MCF 10A (cell line): ENCODE measurements at regions of chr3 and their contacts with region 1.

Region 1: GRCh38 chr3:197711973-197712707 is 24.6 kb downstream of the RUBCN start:
- DNase-seq: peak; percentile 97
- H3K4me3 Mint-ChIP-seq: peak overlapping the region; percentile 82
- H3K27ac Mint-ChIP-seq: peak overlapping the region; percentile 98
- H3K4me1 Mint-ChIP-seq: peaks cover 14% of the 10 kb centered on the region
- H3K27me3 Mint-ChIP-seq: no peaks in the 10 kb centered on the region
- CTCF ChIP-seq: no peak

Region 2: GRCh38 chr3:197730200-197730599 is 18.1 kb after region 1 on chr3:
- CTCF ChIA-PET with region 1: interaction called, 3 read pairs
- POLR2A ChIA-PET with region 1: interaction called, 105 read pairs
- intact Hi-C with region 1: no loop called
- DNase-seq: peak; percentile 60
- H3K4me3 Mint-ChIP-seq: no peak overlapping the region
- H3K27ac Mint-ChIP-seq: peak overlapping the region; percentile 91
- H3K4me1 Mint-ChIP-seq: peaks cover 25% of the 10 kb centered on the region
- H3K27me3 Mint-ChIP-seq: no peaks in the 10 kb centered on the region
- CTCF ChIP-seq: no peak

Region 3: GRCh38 chr3:197736491-197737318 is 24.6 kb after region 1 on chr3 and contains the start of gene RUBCN:
- CTCF ChIA-PET with region 1: no interaction called
- POLR2A ChIA-PET with region 1: interaction called, 105 read pairs
- intact Hi-C with region 1: loop called (anchors 1 kb)
- DNase-seq: peak; percentile 92
- H3K4me3 Mint-ChIP-seq: peak within 1 kb of the TSS; percentile 82
- H3K27ac Mint-ChIP-seq: peak within 1 kb of the TSS; percentile 82
- H3K4me1 Mint-ChIP-seq: peaks cover 20% of the 10 kb centered on the region
- H3K27me3 Mint-ChIP-seq: no peaks in the 10 kb centered on the region
- CTCF ChIP-seq: no peak
- total RNA-seq, gene RUBCN: 29.9 and 35.5 TPM in 2 replicates

Region 4: DNA sequence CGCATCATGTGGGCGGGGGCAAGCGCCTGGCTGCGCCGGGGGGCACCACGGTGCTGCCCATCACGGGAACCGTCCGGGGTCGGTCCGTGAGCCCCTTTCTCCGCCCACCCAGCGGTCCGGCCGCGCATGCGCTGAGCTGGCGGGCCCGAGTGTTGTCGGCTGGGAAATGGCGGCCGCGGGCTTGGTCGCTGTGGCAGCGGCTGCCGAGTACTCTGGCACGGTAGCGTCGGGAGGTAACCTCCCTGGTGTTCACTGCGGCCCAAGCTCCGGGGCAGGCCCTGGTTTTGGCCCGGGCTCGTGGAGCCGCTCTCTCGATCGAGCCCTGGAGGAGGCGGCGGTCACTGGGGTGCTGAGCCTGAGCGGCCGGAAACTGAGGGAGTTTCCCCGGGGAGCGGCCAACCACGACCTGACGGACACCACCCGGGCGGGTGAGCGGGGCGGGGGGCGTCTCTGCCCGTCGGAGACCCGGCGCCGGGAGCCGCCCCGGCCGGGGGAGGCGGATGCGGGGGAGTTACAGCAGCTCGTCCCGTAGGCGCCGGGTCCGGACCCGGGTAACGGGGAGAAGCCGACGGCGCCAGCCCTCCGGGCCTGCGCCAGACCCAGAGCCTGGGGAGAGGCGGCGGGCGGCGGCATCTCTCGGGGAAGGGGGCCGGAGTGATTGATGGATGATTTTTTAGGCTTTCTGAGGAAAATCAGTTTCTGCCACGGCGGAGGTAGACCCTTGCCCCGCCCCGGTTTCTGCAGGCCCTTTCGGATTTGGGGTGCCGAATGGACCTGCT is 79.2 kb after region 1 on chr3 and contains the start of gene LRCH3:
- CTCF ChIA-PET with region 1: interaction called, 7 read pairs
- POLR2A ChIA-PET with region 1: interaction called, 12 read pairs
- intact Hi-C with region 1: no loop called
- DNase-seq: peak; percentile 66
- H3K4me3 Mint-ChIP-seq: peak within 1 kb of the TSS; percentile 87
- H3K27ac Mint-ChIP-seq: peak within 1 kb of the TSS; percentile 90
- H3K4me1 Mint-ChIP-seq: peaks cover 20% of the 10 kb centered on the region
- H3K27me3 Mint-ChIP-seq: no peaks in the 10 kb centered on the region
- CTCF ChIP-seq: no peak
- total RNA-seq, gene LRCH3: 55.3 and 58.8 TPM in 2 replicates

Region 5: DNA sequence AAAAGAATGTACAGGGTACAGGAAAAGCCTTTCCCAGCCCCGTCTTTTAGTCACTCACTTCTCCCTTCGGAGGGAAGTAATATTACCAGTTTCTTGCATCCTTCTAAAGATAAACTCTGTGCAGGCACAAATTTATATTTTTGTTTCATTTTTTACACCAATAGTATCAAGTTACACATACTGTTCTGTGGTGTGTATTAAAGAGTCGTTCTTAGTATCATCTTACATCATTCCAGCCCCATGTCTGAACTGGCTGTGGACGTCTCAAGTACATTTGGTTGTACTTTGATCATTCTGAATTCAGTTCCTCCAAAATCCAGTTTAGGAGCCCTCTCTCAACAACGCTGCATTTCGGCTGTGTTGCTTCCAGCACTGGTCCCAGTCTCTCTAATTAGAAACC is 316.6 kb after region 1 on chr3:
- CTCF ChIA-PET with region 1: no interaction called
- POLR2A ChIA-PET with region 1: no interaction called
- intact Hi-C with region 1: no loop called
- DNase-seq: peak; percentile 32
- H3K4me3 Mint-ChIP-seq: no peak overlapping the region
- H3K27ac Mint-ChIP-seq: no peak overlapping the region
- H3K4me1 Mint-ChIP-seq: peaks cover 8% of the 10 kb centered on the region
- H3K27me3 Mint-ChIP-seq: no peaks in the 10 kb centered on the region
- CTCF ChIP-seq: no peak